Left colon (tissue), 2 donors: ENCODE measurements at regions of chr3 and their contacts with region 1.

Region 1: GRCh38 chr3:139329345-139329850 is 14.4 kb upstream of the MRPS22 start:
- DNase-seq: peak; percentile 84 to 93
- ATAC-seq: peak; percentile 100

Region 2: GRCh38 chr3:139111392-139112229 is 217.8 kb before region 1 on chr3:
- intact Hi-C with region 1: loop called in 1 of 2 experiments (anchors 5 kb)
- DNase-seq: peak; percentile 56 to 81
- ATAC-seq: peak; percentile 84